ENCODE measurements at regions of chr9 and their contacts with region 1.

Region 1: DNA sequence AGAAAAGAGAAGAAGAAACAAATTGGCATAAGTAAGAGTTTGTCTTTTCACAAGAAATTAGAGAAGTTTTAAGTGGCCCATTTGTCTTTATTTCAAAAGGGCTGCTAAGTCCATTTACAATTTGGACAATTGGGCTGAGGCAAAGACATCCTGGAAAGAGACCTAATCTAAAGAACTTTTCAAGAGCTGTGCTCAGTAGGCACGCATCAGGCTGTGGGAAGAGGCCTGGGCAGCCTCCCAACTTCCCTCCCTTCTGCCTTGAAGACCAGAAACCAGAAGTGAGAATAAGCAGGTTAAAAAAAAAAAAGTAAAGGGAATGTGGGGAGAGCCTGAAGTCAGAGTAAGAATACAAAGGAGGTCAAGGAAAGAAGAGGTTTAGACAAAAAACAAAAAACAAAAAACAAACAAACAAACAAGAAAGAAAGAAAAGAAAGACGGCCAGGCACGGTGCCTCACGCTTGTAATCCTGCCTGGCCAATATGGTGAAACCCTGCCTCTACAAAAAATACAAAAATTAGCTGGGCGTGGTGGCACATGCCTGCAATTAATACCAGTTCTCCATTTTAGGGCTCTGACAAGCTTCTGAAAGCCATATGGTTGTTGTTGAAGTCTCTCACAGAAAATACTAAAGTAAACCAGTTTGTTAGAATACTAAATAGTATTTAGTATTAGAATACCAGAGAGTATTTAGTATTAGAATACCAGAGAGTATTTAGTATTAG is 48.0 kb upstream of the CEP78 start:
- H3K4me3 Mint-ChIP-seq: peak overlapping the region; percentile 28
- H3K27ac Mint-ChIP-seq: no peak overlapping the region
- H3K4me1 Mint-ChIP-seq: peaks cover 39% of the 10 kb centered on the region
- H3K27me3 Mint-ChIP-seq: no peaks in the 10 kb centered on the region

Region 2: GRCh38 chr9:78171651-78172050 is 16.3 kb before region 1 on chr9:
- intact Hi-C with region 1: loop called (anchors 2 kb)
- H3K4me3 Mint-ChIP-seq: no peak overlapping the region
- H3K27ac Mint-ChIP-seq: no peak overlapping the region
- H3K4me1 Mint-ChIP-seq: peaks cover 11% of the 10 kb centered on the region
- H3K27me3 Mint-ChIP-seq: no peaks in the 10 kb centered on the region